ENCODE measurements at regions of chr7 and their contacts with region 1.

Region 1: GRCh38 chr7:36967387-36967786 is 243.1 kb upstream of the AOAH start:
- DNase-seq: peak; percentile 72
- H3K4me3 ChIP-seq: no peak overlapping the region
- H3K27ac ChIP-seq: no peak overlapping the region
- H3K4me1 ChIP-seq: peaks cover 19% of the 10 kb centered on the region
- H3K27me3 ChIP-seq: no peaks in the 10 kb centered on the region
- CTCF ChIP-seq: peak; percentile 78 to 86
- POLR2A ChIP-seq: no peak

Region 2: GRCh38 chr7:36931892-36932291 is 35.5 kb before region 1 on chr7:
- CTCF ChIA-PET with region 1: no interaction called
- POLR2A ChIA-PET with region 1: no interaction called
- dilution Hi-C with region 1: no loop called
- intact Hi-C with region 1: no loop called
- DNase-seq: no peak
- H3K4me3 ChIP-seq: no peak overlapping the region
- H3K27ac ChIP-seq: no peak overlapping the region
- H3K4me1 ChIP-seq: no peaks in the 10 kb centered on the region
- H3K27me3 ChIP-seq: no peaks in the 10 kb centered on the region
- CTCF ChIP-seq: no peak
- POLR2A ChIP-seq: no peak

Region 3: GRCh38 chr7:36955456-36956129 is 11.8 kb before region 1 on chr7:
- CTCF ChIA-PET with region 1: interaction called, 11 read pairs
- POLR2A ChIA-PET with region 1: no interaction called
- dilution Hi-C with region 1: no loop called
- intact Hi-C with region 1: no loop called
- DNase-seq: no peak
- H3K4me3 ChIP-seq: no peak overlapping the region
- H3K27ac ChIP-seq: no peak overlapping the region
- H3K4me1 ChIP-seq: no peaks in the 10 kb centered on the region
- H3K27me3 ChIP-seq: no peaks in the 10 kb centered on the region
- CTCF ChIP-seq: no peak
- POLR2A ChIP-seq: no peak

Region 4: DNA sequence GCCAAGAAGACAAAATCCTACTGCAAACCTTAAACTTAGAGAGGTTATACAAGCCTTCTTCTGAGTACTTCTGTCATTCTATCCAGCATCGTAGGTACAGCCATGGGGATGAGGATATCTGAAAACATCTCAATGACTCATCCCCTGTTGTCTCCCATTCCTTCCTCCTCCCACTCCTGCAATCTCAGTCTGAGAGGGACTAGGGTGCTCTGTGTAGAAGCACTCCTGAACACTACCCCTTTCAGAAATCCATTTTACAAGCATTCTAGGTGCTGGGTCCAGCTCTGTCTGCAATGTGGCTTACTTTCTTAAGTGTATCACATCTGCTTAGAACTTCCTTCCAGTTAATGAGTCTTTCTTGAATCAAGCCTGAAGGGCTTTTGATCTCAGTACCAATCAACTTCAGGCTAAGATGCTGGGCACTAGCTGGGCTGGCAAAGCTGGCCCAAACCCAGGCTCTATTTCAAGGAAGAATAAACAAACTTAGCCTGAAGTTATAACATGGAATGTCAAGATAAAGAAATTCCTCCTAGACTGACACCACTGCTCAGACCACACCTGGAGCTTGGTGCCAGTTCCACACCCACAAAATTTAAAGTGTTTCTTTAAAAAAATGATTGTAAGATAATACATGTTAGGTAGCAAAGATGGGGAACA is 27.2 kb after region 1 on chr7:
- CTCF ChIA-PET with region 1: interaction called, 191 read pairs
- POLR2A ChIA-PET with region 1: no interaction called
- dilution Hi-C with region 1: no loop called
- intact Hi-C with region 1: no loop called
- DNase-seq: no peak
- H3K4me3 ChIP-seq: no peak overlapping the region
- H3K27ac ChIP-seq: no peak overlapping the region
- H3K4me1 ChIP-seq: no peaks in the 10 kb centered on the region
- H3K27me3 ChIP-seq: no peaks in the 10 kb centered on the region
- CTCF ChIP-seq: no peak
- POLR2A ChIP-seq: no peak

Region 5: DNA sequence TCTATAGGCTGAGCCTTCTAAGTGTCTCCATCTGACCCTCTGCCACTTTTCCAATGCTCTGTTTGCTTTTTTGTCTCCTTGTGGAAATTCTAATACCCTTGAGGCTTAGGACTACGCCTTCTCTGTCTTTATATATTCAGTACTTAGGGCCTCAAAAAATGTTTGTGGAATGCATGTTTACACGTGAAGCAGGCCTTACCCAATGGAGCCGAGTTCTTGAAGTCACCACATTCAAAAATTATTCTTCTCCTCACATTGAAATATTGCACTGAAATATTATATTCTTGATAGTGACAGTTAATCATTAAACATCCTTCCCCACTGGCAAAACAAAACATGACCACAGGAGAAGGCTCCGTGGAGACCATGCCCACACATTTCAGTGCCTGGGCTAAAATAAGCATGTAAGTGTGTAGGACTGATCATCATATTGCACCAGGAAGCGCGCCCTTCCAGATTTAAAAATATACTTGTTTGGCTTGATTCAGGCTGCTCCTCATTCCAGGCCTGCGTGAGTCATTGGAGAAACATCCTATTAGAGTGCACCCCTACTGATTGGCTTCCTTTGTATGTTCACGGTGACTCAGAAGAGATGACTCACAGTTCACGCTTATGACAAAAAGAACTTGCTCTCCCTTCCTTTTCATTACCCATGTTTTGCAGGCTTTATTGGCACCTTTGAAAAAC is 64.3 kb after region 1 on chr7:
- CTCF ChIA-PET with region 1: no interaction called
- POLR2A ChIA-PET with region 1: no interaction called
- dilution Hi-C with region 1: no loop called
- intact Hi-C with region 1: loop called (anchors 1 kb)
- DNase-seq: peak; percentile 100
- H3K4me3 ChIP-seq: no peak overlapping the region
- H3K27ac ChIP-seq: peak overlapping the region; percentile 77
- H3K4me1 ChIP-seq: peaks cover 32% of the 10 kb centered on the region
- H3K27me3 ChIP-seq: no peaks in the 10 kb centered on the region
- CTCF ChIP-seq: no peak
- POLR2A ChIP-seq: peak; percentile 35

Measured in endothelial cell of umbilical vein (primary cell).